Endothelial cell of umbilical vein (primary cell): ENCODE measurements at regions of chr3 and their contacts with region 1.

Region 1: GRCh38 chr3:137013955-137014688 is 56.3 kb downstream of the IL20RB start:
- DNase-seq: peak; percentile 92
- H3K4me3 ChIP-seq: peak overlapping the region; percentile 39 to 87 (median 58)
- H3K27ac ChIP-seq: peak overlapping the region; percentile 50
- H3K4me1 ChIP-seq: peaks cover 8% of the 10 kb centered on the region
- H3K27me3 ChIP-seq: no peaks in the 10 kb centered on the region
- CTCF ChIP-seq: peak; percentile 71 to 74
- POLR2A ChIP-seq: no peak

Region 2: DNA sequence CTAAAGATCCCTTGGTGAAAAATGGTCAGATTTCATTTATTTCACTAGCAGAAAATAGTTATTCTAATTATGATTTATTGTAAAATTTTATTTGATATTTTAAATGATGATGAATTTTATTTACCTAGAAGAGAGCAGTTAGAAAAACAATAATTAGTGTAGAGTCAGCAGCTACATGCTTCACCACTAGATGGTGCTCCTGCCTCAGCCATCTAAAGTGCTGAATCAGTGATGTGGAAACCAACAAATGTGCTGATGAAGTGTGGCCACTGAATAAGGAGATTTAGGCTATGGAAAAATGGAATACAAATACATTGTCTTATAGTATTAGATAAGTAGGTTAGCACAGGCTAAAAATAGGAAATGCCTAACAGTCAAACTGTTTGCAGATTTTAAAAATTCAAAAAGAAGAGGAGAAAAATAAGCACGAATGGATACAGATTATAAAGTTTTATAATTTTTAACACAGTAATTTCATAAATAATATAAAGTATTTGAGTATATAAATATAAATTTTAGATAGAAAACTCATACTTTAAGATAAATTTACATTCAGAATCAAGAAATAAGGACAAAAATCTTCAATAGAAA is 938.8 kb before region 1 on chr3:
- CTCF ChIA-PET with region 1: interaction called, 39 read pairs
- POLR2A ChIA-PET with region 1: no interaction called
- dilution Hi-C with region 1: no loop called
- intact Hi-C with region 1: loop called (anchors 1 kb)
- DNase-seq: peak; percentile 81
- H3K4me3 ChIP-seq: no peak overlapping the region
- H3K27ac ChIP-seq: no peak overlapping the region
- H3K4me1 ChIP-seq: no peaks in the 10 kb centered on the region
- H3K27me3 ChIP-seq: no peaks in the 10 kb centered on the region
- CTCF ChIP-seq: peak; percentile 63 to 76
- POLR2A ChIP-seq: no peak

Region 3: DNA sequence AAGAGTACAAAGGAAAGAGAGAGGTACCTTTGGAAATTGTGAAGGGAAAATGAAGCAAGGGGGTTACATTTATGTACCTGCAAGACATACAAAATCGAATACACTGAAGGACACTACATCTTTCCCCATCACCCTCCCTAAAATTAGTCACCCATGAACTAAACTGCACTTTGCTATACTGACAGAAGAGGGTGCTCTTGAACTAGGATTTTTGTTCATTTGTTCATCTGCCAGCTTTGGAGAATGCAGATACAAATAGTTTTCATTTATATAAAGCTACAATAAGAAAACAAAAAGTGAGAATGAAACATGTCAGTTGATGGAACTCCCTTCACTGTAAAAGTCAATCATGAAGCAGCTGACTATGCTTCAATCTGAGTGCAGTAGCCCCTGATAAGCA is 708.2 kb before region 1 on chr3:
- CTCF ChIA-PET with region 1: interaction called, 40 read pairs
- POLR2A ChIA-PET with region 1: no interaction called
- dilution Hi-C with region 1: no loop called
- intact Hi-C with region 1: no loop called
- DNase-seq: peak; percentile 61
- H3K4me3 ChIP-seq: no peak overlapping the region
- H3K27ac ChIP-seq: no peak overlapping the region
- H3K4me1 ChIP-seq: no peaks in the 10 kb centered on the region
- H3K27me3 ChIP-seq: no peaks in the 10 kb centered on the region
- CTCF ChIP-seq: peak in 1 of 2 donors; percentile 39
- POLR2A ChIP-seq: no peak

Region 4: GRCh38 chr3:136818769-136819391 is 195.2 kb before region 1 on chr3 and contains the start of gene SLC35G2:
- CTCF ChIA-PET with region 1: interaction called, 17 read pairs
- POLR2A ChIA-PET with region 1: no interaction called
- dilution Hi-C with region 1: no loop called
- intact Hi-C with region 1: loop called (anchors 1 kb)
- DNase-seq: peak; percentile 84
- H3K4me3 ChIP-seq: peak within 1 kb of the TSS; percentile 31 to 78 (median 77)
- H3K27ac ChIP-seq: peak within 1 kb of the TSS; percentile 97
- H3K4me1 ChIP-seq: peaks cover 16% of the 10 kb centered on the region
- H3K27me3 ChIP-seq: no peaks in the 10 kb centered on the region
- CTCF ChIP-seq: no peak
- POLR2A ChIP-seq: no peak
- total RNA-seq, gene SLC35G2: 17.7 and 19.4 TPM in 2 replicates

Region 5: DNA sequence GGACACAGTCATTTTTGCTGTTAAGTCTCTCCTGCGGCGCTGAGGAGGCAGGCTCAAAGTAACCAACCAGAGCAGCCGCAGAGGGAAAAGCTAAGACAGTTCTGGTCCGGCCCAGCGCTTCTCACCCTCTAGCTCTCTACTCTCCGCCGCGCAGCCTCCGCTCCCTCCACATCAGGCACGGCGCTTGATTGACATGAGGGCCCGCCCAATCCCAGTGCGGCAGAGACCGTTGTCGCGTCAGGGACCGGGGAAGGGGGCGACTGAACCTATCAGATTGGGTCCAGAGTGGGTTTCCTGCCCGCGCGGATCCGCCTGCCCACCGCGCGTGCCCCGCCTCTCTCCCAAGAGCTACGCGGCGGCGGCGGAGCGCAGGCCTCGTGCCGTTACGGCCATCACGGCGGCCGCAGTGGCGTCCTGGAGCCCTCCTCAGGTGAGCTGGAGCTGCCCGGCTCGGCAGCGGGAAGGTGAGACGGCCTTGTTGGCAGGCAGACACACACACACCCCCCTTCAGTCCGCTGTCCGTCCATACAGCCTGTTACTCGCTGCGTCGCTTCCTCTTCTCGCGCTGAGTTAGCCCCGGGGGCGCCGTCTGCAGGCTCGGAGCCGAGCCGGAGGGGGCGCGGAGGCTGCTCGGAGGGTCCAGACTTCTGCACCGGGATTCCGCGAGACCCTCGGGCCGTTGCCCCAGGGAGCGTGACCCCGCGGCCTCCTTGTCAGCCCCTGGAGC is 152.1 kb before region 1 on chr3 and contains the start of gene NCK1:
- CTCF ChIA-PET with region 1: interaction called, 62 read pairs
- POLR2A ChIA-PET with region 1: no interaction called
- dilution Hi-C with region 1: no loop called
- intact Hi-C with region 1: loop called (anchors 1 kb)
- DNase-seq: peak; percentile 99
- H3K4me3 ChIP-seq: peak within 1 kb of the TSS; percentile 81 to 96 (median 95)
- H3K27ac ChIP-seq: peak within 1 kb of the TSS; percentile 83
- H3K4me1 ChIP-seq: peaks cover 13% of the 10 kb centered on the region
- H3K27me3 ChIP-seq: no peaks in the 10 kb centered on the region
- CTCF ChIP-seq: peak in 1 of 2 donors; percentile 23
- POLR2A ChIP-seq: peak; percentile 91
- total RNA-seq, gene NCK1: 45.1 and 52.2 TPM in 2 replicates

Region 6: GRCh38 chr3:136994772-136995516 is 19.2 kb before region 1 on chr3:
- CTCF ChIA-PET with region 1: interaction called, 13 read pairs
- POLR2A ChIA-PET with region 1: no interaction called
- dilution Hi-C with region 1: no loop called
- intact Hi-C with region 1: no loop called
- DNase-seq: peak; percentile 98
- H3K4me3 ChIP-seq: no peak overlapping the region
- H3K27ac ChIP-seq: peak overlapping the region; percentile 32
- H3K4me1 ChIP-seq: peaks cover 15% of the 10 kb centered on the region
- H3K27me3 ChIP-seq: no peaks in the 10 kb centered on the region
- CTCF ChIP-seq: no peak
- POLR2A ChIP-seq: no peak